ENCODE measurements at regions of chr2 and their contacts with region 1.

Region 1: DNA sequence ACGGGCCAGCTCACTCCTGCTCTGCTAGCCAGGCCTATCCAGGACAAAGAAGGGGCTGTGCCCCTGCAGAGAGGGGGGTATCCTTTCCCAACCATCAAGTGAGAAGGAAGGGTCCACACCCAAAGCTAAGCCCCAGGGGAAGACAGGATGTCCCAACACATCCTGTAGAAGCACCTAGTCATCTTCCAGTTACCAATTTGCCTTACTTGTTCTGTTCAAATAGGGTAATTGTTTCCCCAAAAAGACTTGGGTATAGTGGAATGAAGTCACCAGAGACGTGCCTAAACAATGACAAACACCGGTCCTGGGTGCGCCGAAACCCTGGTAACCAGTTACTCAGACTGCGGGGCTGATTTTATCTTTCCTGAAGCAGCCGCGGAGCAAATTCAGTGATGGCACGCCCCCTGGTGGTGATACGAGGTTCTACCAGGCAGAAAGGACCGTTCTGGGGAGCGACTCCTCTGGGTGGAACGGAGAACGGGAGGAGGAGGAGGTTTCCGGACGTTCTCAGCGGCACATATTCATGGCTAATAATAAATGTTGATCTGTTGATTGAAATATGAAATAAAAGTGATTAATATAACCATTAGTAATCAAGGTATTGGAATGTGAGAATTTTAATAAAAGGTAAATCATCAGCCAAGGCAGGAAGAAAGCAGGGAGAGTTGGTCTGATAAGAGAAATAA is 109.3 kb upstream of the STON1 start:
- DNase-seq: peak; percentile 83
- CTCF ChIP-seq: peak; percentile 91

Region 2: GRCh38 chr2:47867205-47867604 is 553.5 kb before region 1 on chr2:
- in situ Hi-C with region 1: loop called (anchors 25 kb)
- DNase-seq: no peak
- CTCF ChIP-seq: no peak